ENCODE measurements at regions of chr17 and their contacts with region 1.

Region 1: GRCh38 chr17:51371732-51372151 is 111.4 kb downstream of the UTP18 start:
- DNase-seq: peak in 26 of 35 experiments; percentile 4 to 76 (median 25)
- ATAC-seq: peak in 3 of 4 experiments; percentile 79 to 88 (median 85)
- H3K4me3 ChIP-seq: no peak overlapping the region
- H3K4me3 Mint-ChIP-seq: peak overlapping the region in 1 of 3 donors; percentile 30
- H3K27ac ChIP-seq: no peak overlapping the region
- H3K27ac Mint-ChIP-seq: peak overlapping the region in 1 of 2 donors; percentile 1
- H3K4me1 ChIP-seq: peaks cover 7 to 10% of the 10 kb centered on the region in 2 experiments
- H3K4me1 Mint-ChIP-seq: peaks cover 9 to 18% (median 16%) of the 10 kb centered on the region in 3 donors
- H3K27me3 ChIP-seq: peaks cover 0 to 9% of the 10 kb centered on the region in 2 experiments
- H3K27me3 Mint-ChIP-seq: no peaks in the 10 kb centered on the region

Region 2: GRCh38 chr17:51533821-51534220 is 162.1 kb after region 1 on chr17:
- CTCF ChIA-PET with region 1: interaction called, 3 to 16 read pairs
- POLR2A ChIA-PET with region 1: no interaction called
- DNase-seq: no peak
- ATAC-seq: no peak
- H3K4me3 ChIP-seq: no peak overlapping the region
- H3K4me3 Mint-ChIP-seq: no peak overlapping the region
- H3K27ac ChIP-seq: no peak overlapping the region
- H3K27ac Mint-ChIP-seq: no peak overlapping the region
- H3K4me1 ChIP-seq: peaks cover 0 to 2% of the 10 kb centered on the region in 2 experiments
- H3K4me1 Mint-ChIP-seq: no peaks in the 10 kb centered on the region
- H3K27me3 ChIP-seq: peaks cover 0 to 7% of the 10 kb centered on the region in 2 experiments
- H3K27me3 Mint-ChIP-seq: peaks cover 2 to 13% of the 10 kb centered on the region in 2 donors

Region 3: DNA sequence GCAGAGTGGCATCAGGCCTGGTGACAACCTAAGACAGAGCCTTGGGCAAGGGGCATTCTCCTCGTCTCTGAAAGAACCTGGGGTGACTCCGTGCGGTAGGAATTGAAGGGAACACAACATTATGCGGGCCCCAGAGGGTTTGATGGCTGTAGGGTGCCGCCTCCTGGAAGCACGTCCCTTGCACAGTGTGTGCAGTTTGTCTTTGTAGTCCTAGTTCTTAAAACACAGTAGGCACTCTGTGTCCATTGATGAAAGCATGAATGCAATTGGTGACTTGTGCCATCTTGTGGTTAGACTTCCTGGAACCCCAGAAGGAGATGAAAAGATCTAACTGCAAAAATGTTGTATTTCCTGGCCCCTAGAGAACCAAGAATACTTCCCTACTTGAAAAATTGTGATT is 168.4 kb after region 1 on chr17:
- CTCF ChIA-PET with region 1: interaction called, 12 to 16 read pairs
- POLR2A ChIA-PET with region 1: no interaction called
- DNase-seq: peak in 6 of 35 experiments; percentile 1 to 36 (median 6)
- ATAC-seq: peak in 3 of 4 experiments; percentile 62 to 77 (median 62)
- H3K4me3 ChIP-seq: no peak overlapping the region
- H3K4me3 Mint-ChIP-seq: no peak overlapping the region
- H3K27ac ChIP-seq: no peak overlapping the region
- H3K27ac Mint-ChIP-seq: peak overlapping the region; percentile 4 to 9
- H3K4me1 ChIP-seq: peaks cover 7 to 8% of the 10 kb centered on the region in 2 experiments
- H3K4me1 Mint-ChIP-seq: peaks cover 13 to 26% (median 18%) of the 10 kb centered on the region in 3 donors
- H3K27me3 ChIP-seq: peaks cover 0 to 7% of the 10 kb centered on the region in 2 experiments
- H3K27me3 Mint-ChIP-seq: no peaks in the 10 kb centered on the region

Measured in T-cell (primary cell).